ENCODE measurements at regions of chr11 and their contacts with region 1.

Region 1: GRCh38 chr11:130314750-130315285 is at the start of gene ZBTB44:
- DNase-seq: peak; percentile 90 to 99 (median 95)

Region 2: GRCh38 chr11:130202009-130202817 is 112.6 kb before region 1 on chr11:
- intact Hi-C with region 1: no loop called
- DNase-seq: no peak

Region 3: GRCh38 chr11:130403271-130403804 is 88.5 kb after region 1 on chr11:
- intact Hi-C with region 1: loop called (anchors 10 kb)
- DNase-seq: peak in 41 of 42 donors; percentile 21 to 85 (median 61)

Region 4: DNA sequence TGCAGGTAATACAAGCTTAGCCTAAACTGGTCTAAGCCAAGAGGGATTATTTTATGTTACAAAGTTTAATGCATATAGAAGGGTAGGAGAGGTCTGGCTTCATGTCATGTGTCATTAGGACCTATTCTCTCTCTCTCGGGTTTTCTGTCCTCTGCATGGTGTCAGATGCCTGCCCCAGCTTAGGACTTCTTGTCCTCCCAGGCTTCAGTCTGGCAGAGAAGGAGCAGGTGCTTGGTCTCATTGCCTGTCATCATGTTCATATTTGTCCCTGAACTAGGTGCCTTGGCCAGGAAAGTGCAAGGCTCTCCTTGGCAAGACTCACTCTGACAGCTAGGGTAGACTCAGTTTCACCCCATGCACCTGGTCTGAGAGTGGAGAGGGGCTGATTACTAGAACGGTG is 259.9 kb after region 1 on chr11:
- intact Hi-C with region 1: no loop called
- DNase-seq: no peak